ENCODE measurements at regions of chr11 and their contacts with region 1.

Region 1: DNA sequence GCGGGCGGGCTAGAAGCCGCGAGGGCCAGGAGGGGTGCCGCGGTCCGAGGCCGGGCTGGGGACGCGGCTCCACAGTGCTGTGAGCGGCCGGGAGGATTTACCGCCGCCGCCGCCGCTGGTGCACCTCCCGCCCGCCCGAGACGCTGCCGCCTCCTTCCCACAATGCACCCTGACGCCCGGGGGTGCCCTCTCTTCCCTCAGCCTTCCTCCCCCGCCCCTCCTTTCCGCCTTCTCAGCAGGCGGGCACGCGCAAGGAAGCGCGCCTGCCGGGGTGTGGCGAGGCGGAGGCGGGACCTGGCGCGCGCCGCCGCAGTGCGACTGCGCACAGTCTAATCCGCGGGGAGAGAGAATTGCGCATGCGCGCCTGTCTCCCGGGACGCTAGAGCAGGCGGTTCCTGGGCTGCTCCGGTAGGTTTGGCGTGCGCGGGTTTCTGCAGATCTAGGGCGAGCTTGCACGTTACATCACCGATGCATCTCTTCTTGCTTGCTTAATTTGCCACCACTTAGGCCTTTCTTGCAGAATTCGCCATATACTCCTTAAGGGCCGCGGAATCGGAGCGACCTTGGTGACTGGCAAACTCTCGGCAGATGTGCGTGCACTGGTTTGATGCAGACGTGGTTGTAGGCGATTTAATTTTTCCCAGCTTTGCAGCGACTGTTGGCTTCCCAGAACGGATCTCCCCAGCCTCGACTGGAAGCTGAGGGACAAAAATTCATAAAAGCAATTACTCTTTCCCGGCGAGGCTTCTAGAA is at the starts of genes GVQW3 and THAP12:
- DNase-seq: peak; percentile 97 to 99 (median 98)
- ATAC-seq: peak; percentile 97 to 99 (median 98)
- H3K4me3 ChIP-seq: peak within 1 kb of the TSS; percentile 72 to 99 (median 93)
- H3K27ac ChIP-seq: peak within 1 kb of the TSS; percentile 82 to 92 (median 87)
- H3K4me1 ChIP-seq: peaks cover 0 to 53% (median 29%) of the 10 kb centered on the region in 12 donors
- H3K27me3 ChIP-seq: no peaks in the 10 kb centered on the region
- CTCF ChIP-seq: peak in 6 of 12 donors; percentile 14 to 59 (median 35)
- POLR2A ChIP-seq: peak; percentile 28 to 91
- total RNA-seq, gene GVQW3: 0.19 to 2.3 (median 1.2) TPM
- total RNA-seq, gene THAP12: 14.2 to 29.3 (median 19.5) TPM

Region 2: GRCh38 chr11:76347466-76347865 is 33.7 kb before region 1 on chr11:
- intact Hi-C with region 1: no loop called
- DNase-seq: no peak
- ATAC-seq: no peak
- H3K4me3 ChIP-seq: no peak overlapping the region
- H3K27ac ChIP-seq: no peak overlapping the region
- H3K4me1 ChIP-seq: peaks cover 0 to 8% (median 0%) of the 10 kb centered on the region in 12 donors
- H3K27me3 ChIP-seq: no peaks in the 10 kb centered on the region
- CTCF ChIP-seq: no peak
- POLR2A ChIP-seq: no peak

Region 3: GRCh38 chr11:76397383-76397782 is 16.2 kb after region 1 on chr11:
- intact Hi-C with region 1: no loop called
- DNase-seq: no peak
- ATAC-seq: no peak
- H3K4me3 ChIP-seq: no peak overlapping the region
- H3K27ac ChIP-seq: no peak overlapping the region
- H3K4me1 ChIP-seq: peaks cover 0 to 7% (median 0%) of the 10 kb centered on the region in 12 donors
- H3K27me3 ChIP-seq: no peaks in the 10 kb centered on the region
- CTCF ChIP-seq: no peak
- POLR2A ChIP-seq: no peak

Region 4: DNA sequence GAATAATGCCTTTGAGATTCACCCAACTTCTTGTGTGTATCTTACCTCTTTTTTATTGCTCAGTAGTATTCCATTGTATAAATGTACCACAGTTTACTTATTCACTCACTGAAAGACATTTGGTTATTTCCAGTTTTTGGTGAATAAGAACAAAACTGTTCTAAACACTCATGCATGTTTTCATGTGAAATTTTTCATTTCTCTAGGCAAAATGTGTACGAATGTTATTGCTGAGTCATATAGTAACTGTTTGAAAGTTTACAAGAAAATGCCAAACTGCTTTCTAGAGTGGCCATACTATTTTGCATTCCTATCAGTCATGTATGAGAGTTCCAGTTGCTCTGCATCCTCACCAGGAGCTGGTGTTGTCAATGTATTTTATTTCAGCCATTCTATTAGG is 54.9 kb after region 1 on chr11:
- intact Hi-C with region 1: loop called in 5 of 10 experiments (anchors 5 kb)
- DNase-seq: no peak
- ATAC-seq: no peak
- H3K4me3 ChIP-seq: no peak overlapping the region
- H3K27ac ChIP-seq: no peak overlapping the region
- H3K4me1 ChIP-seq: peaks cover 0 to 4% (median 0%) of the 10 kb centered on the region in 12 donors
- H3K27me3 ChIP-seq: no peaks in the 10 kb centered on the region
- CTCF ChIP-seq: no peak
- POLR2A ChIP-seq: no peak